Mammary epithelial cell (primary cell): ENCODE measurements at regions of chr10 and their contacts with region 1.

Region 1: DNA sequence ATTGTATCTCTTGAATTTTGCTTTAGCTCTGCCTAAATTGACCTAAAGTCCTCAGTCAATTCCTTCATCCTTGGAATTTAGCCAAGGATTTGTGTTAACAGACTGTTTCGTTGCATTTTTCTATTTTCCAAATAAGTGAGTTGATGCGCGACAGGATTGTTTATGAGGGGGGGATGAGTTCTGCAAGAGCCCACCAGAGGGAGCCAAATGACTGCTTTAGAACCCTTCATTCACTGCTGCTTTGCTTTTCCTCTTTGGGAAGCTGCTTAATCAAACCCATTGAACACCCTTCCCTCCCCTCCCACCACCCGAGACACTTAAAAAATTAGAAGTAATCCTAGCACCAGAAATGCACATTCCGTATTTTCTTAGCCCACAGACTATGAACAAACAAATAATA is 33.7 kb upstream of the PTF1A start:
- DNase-seq: peak; percentile 31
- H3K4me3 ChIP-seq: peak overlapping the region in 1 of 3 experiments; percentile 13
- H3K27ac ChIP-seq: no peak overlapping the region
- H3K4me1 ChIP-seq: no peaks in the 10 kb centered on the region
- H3K27me3 ChIP-seq: no peaks in the 10 kb centered on the region
- CTCF ChIP-seq: peak; percentile 83 to 89

Region 2: DNA sequence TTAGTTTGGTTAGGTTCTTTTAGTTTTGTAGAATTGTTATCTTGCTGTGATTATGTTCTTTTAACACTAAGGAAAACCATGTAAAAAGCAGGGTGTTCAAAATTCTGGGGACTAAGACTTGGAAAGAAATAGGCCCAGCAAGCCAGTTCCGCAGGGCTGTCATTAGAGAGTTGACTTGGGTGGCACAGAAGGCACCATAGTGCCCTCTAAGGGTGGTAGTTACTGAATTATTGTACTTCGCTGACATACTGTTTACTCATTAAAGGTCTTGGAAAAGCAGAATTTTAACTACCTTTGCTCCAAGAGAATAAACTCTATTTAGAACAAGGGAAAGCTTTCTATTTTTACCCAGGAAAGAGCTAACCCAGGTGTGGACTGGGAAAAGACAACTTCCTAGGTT is 367.0 kb after region 1 on chr10:
- CTCF ChIA-PET with region 1: no interaction called
- dilution Hi-C with region 1: no loop called
- in situ Hi-C with region 1: loop called in 1 of 2 experiments (anchors 25 kb)
- intact Hi-C with region 1: loop called (anchors 2 kb)
- DNase-seq: peak; percentile 14
- H3K4me3 ChIP-seq: no peak overlapping the region
- H3K27ac ChIP-seq: no peak overlapping the region
- H3K4me1 ChIP-seq: no peaks in the 10 kb centered on the region
- H3K27me3 ChIP-seq: peaks cover 1% of the 10 kb centered on the region
- CTCF ChIP-seq: peak; percentile 34 to 66

Region 3: GRCh38 chr10:23694446-23694920 is 536.1 kb after region 1 on chr10:
- CTCF ChIA-PET with region 1: no interaction called
- dilution Hi-C with region 1: loop called (anchors 10 kb)
- in situ Hi-C with region 1: no loop called
- intact Hi-C with region 1: no loop called
- DNase-seq: peak; percentile 23
- H3K4me3 ChIP-seq: no peak overlapping the region
- H3K27ac ChIP-seq: no peak overlapping the region
- H3K4me1 ChIP-seq: no peaks in the 10 kb centered on the region
- H3K27me3 ChIP-seq: peaks cover 30% of the 10 kb centered on the region
- CTCF ChIP-seq: no peak

Region 4: DNA sequence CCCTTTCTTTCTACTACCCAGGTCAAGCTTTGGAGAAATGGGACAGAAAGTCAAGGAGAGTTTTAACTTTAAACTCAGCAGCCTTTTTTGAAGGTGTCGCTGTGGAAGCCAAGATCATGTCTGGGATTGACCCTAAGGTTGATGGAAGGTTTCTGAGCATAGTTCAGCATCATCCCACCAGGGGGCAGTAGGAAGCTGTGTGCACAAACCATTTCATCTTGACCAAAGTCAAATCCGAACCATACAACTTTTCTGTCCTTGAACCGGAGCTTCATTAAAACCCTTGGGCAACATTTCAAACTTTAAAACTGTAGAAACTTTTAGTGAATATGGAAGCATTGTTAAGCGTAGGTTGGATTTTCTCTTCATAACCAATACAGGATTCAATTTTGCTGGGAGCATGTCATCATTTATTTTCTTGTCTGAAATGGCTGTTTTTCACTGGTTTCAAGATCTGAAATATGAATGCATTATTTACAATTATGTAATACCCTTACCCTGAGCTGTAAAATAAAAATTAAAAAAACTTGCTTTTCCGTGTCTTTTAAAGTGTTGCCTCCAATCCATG is 836.2 kb after region 1 on chr10:
- CTCF ChIA-PET with region 1: no interaction called
- dilution Hi-C with region 1: no loop called
- in situ Hi-C with region 1: no loop called
- intact Hi-C with region 1: loop called (anchors 2 kb)
- DNase-seq: peak; percentile 25
- H3K4me3 ChIP-seq: no peak overlapping the region
- H3K27ac ChIP-seq: no peak overlapping the region
- H3K4me1 ChIP-seq: no peaks in the 10 kb centered on the region
- H3K27me3 ChIP-seq: peaks cover 3% of the 10 kb centered on the region
- CTCF ChIP-seq: peak; percentile 91 to 93